Activated CD4-positive, alpha-beta memory T cell treated with anti-CD3 and anti-CD28 coated beads for 36 hours (primary cell): ENCODE measurements at regions of chr10 and their contacts with region 1.

Region 1: GRCh38 chr10:16436758-16437539 is at the start of gene PTER:
- DNase-seq: peak; percentile 99
- H3K4me3 Mint-ChIP-seq: peak within 1 kb of the TSS; percentile 86
- H3K27ac Mint-ChIP-seq: peak within 1 kb of the TSS; percentile 84
- H3K4me1 Mint-ChIP-seq: peaks cover 43% of the 10 kb centered on the region
- H3K27me3 Mint-ChIP-seq: no peaks in the 10 kb centered on the region
- total RNA-seq, gene PTER: 25.1 to 27.2 TPM

Region 2: DNA sequence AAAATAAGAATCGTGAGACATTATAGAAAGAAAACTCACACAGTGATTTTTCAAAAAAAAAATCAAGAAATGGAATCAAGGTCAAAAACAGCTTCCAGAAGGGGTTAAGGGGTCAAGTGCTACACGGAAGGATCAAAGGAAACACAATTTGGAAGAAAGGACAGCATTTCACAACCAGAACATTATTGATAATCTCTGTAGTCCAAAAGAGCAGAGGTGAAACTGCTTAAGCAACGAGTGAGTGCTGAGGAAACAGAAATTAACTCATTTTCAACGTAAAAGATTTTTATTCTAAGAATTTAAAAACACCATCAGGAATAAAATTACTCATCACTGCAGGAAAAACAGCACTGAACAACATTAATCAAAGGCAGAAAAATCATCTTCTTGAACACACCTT is 600.1 kb before region 1 on chr10:
- CTCF ChIA-PET with region 1: no interaction called
- POLR2A ChIA-PET with region 1: no interaction called
- intact Hi-C with region 1: loop called (anchors 10 kb)
- DNase-seq: no peak
- H3K4me3 Mint-ChIP-seq: no peak overlapping the region
- H3K27ac Mint-ChIP-seq: no peak overlapping the region
- H3K4me1 Mint-ChIP-seq: peaks cover 10% of the 10 kb centered on the region
- H3K27me3 Mint-ChIP-seq: no peaks in the 10 kb centered on the region

Region 3: DNA sequence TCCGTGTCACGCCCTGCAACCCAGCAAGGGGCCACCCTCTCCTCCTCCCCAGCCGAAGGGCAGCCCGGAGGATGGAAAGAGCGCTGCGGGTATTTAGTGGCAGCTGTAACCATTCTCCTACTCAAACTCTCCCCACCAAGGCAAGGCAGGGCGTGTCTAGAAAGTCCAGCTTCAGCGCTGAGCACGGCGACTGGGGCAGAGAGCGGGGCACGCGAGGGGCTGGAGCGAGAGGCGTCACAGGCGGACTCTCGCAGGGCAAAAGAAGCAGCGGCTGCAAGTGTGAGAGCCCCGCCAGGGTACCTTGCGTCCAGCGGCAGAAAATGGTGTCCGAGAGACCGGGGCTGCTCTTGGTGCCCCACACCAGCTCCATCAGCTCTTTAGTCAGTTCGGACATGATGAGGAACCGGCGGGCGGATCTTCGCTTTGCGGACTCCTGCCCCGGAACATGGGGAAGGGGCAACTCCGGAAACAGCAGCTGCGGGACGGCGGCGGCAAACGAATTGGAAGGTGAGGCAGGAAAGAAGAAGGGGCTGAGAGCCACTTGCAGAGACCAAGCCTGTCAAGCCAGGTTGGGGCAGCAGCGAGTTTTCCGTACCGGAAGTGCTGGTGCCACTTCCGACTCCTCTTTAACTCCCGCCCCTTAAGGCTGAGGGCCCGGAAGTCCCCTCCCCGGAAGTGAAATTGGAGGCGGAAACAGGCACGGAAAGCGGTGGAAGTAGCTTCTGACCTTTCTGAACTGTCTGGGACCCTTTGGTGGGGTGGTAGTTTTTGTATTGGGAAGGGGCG is 576.9 kb before region 1 on chr10 and contains the start of gene MINDY3:
- CTCF ChIA-PET with region 1: no interaction called
- POLR2A ChIA-PET with region 1: no interaction called
- intact Hi-C with region 1: loop called (anchors 10 kb)
- DNase-seq: peak; percentile 88
- H3K4me3 Mint-ChIP-seq: peak within 1 kb of the TSS; percentile 99
- H3K27ac Mint-ChIP-seq: peak within 1 kb of the TSS; percentile 90
- H3K4me1 Mint-ChIP-seq: peaks cover 27% of the 10 kb centered on the region
- H3K27me3 Mint-ChIP-seq: peaks cover 13% of the 10 kb centered on the region
- total RNA-seq, gene MINDY3: 15.3 to 16.7 TPM

Region 4: GRCh38 chr10:16141499-16141898 is 295.4 kb before region 1 on chr10:
- CTCF ChIA-PET with region 1: no interaction called
- POLR2A ChIA-PET with region 1: no interaction called
- intact Hi-C with region 1: no loop called
- DNase-seq: no peak
- H3K4me3 Mint-ChIP-seq: no peak overlapping the region
- H3K27ac Mint-ChIP-seq: no peak overlapping the region
- H3K4me1 Mint-ChIP-seq: no peaks in the 10 kb centered on the region
- H3K27me3 Mint-ChIP-seq: peaks cover 4% of the 10 kb centered on the region

Region 5: GRCh38 chr10:16195178-16195769 is 241.7 kb before region 1 on chr10:
- CTCF ChIA-PET with region 1: no interaction called
- POLR2A ChIA-PET with region 1: no interaction called
- intact Hi-C with region 1: loop called (anchors 1 kb)
- DNase-seq: no peak
- H3K4me3 Mint-ChIP-seq: no peak overlapping the region
- H3K27ac Mint-ChIP-seq: no peak overlapping the region
- H3K4me1 Mint-ChIP-seq: peaks cover 13% of the 10 kb centered on the region
- H3K27me3 Mint-ChIP-seq: peaks cover 1% of the 10 kb centered on the region

Region 6: DNA sequence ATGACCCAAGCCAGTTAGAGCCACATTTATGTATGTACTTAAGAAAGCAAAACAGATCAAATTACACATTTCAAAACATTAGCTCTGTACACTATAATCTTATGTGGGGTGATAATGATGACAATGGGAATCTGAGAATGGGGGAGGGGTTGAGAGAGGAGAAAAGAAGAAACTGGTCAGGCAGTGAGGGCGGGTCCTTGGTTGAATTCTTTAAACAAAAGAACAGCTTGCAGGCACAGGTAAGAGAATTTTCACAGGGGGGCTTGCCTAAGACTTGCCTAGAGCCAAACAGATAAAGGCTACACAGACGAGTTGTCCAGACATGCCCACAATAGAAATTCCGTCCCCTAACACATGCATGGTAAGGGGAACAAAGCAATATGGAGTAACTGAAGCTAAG is 76.9 kb before region 1 on chr10:
- CTCF ChIA-PET with region 1: no interaction called
- POLR2A ChIA-PET with region 1: no interaction called
- intact Hi-C with region 1: no loop called
- DNase-seq: no peak
- H3K4me3 Mint-ChIP-seq: no peak overlapping the region
- H3K27ac Mint-ChIP-seq: no peak overlapping the region
- H3K4me1 Mint-ChIP-seq: no peaks in the 10 kb centered on the region
- H3K27me3 Mint-ChIP-seq: peaks cover 7% of the 10 kb centered on the region

Region 7: GRCh38 chr10:16520900-16521299 is 84.0 kb after region 1 on chr10:
- CTCF ChIA-PET with region 1: interaction called, 3 read pairs
- POLR2A ChIA-PET with region 1: no interaction called
- intact Hi-C with region 1: loop called (anchors 1 kb)
- DNase-seq: peak; percentile 62
- H3K4me3 Mint-ChIP-seq: peak overlapping the region; percentile 52
- H3K27ac Mint-ChIP-seq: no peak overlapping the region
- H3K4me1 Mint-ChIP-seq: peaks cover 10% of the 10 kb centered on the region
- H3K27me3 Mint-ChIP-seq: peaks cover 27% of the 10 kb centered on the region

Region 8: GRCh38 chr10:16663444-16663843 is 226.5 kb after region 1 on chr10:
- CTCF ChIA-PET with region 1: no interaction called
- POLR2A ChIA-PET with region 1: no interaction called
- intact Hi-C with region 1: loop called (anchors 2 kb)
- DNase-seq: no peak
- H3K4me3 Mint-ChIP-seq: no peak overlapping the region
- H3K27ac Mint-ChIP-seq: no peak overlapping the region
- H3K4me1 Mint-ChIP-seq: peaks cover 14% of the 10 kb centered on the region
- H3K27me3 Mint-ChIP-seq: no peaks in the 10 kb centered on the region

Region 9: DNA sequence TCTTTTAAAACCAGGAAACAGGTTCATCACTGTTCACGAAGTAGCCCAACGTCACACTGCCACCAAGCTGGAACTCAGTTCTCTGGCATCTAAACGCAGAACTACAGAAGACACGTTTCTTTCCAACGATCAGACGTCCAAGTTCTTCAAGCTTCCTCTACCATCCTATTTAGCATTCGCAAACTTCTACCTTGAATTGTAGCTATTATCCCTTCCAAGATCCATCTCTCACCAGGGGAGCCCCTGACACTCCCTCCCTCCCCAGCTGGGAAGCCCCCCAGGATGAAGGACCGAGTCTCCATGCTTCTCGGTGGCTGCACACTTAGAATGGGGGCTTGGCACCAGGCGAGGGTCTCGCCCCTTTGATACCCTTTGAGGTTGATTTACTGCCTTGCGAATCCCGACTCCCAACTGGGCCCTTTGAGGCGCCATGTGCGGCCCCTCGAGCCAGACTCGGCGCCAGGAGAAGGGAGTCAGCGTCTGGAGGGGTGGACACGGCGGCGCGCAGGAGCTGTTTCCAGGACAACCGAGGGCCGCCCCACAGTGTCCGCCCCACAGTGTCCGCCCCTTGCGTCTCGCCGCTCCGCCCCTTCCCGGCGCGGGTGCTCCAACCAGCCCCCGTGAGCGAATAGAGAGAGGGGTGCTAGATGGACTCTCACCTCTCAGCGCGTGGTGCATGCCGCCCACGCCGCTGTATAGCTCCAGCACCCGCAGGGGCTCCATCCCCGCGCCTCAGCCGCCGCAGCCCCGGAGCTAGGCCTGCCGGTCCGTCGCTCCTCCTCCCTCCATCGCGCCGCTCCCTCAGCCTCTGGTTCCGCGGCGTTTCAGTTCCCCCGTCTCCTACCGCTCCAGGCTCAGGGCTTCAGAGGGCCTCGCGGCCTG is 764.2 kb after region 1 on chr10 and contains the start of gene TRDMT1:
- CTCF ChIA-PET with region 1: no interaction called
- POLR2A ChIA-PET with region 1: no interaction called
- intact Hi-C with region 1: loop called (anchors 10 kb)
- DNase-seq: peak; percentile 82
- H3K4me3 Mint-ChIP-seq: peak within 1 kb of the TSS; percentile 94
- H3K27ac Mint-ChIP-seq: peak within 1 kb of the TSS; percentile 91
- H3K4me1 Mint-ChIP-seq: peaks cover 46% of the 10 kb centered on the region
- H3K27me3 Mint-ChIP-seq: no peaks in the 10 kb centered on the region
- total RNA-seq, gene TRDMT1: 5.0 to 5.8 TPM